ENCODE measurements at regions of chr11 and their contacts with region 1.

Region 1: DNA sequence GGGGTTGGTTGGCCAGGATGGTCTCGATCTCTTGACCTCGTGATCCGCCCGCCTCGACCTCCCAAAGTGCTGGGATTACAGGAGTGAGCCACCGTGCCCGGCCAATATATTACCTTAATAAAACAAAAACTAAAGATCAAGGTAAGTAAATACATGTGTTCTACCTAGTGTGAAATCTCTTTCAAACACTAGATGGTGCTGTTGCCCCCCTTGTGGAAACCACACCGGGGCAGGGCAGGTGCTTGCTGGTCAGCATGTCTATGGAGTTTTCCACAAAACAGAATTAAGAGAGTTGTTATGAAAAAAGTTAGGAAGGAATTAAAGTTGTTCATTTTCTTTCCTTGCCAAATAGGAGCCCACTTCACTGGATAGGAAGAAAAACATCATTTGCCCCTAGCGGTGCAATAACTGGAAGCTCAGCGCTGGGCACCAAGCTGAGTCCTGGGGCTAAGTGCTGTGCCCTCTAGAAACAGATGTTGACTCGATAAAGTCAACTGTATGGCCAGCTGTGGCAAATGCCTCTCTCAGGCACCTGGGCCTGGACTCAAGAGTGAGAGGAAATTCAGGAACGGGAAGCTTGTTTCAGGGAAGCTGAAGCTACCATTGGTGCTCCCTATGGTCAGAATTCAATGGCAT is 6.3 kb upstream of the KCNJ5 start:
- DNase-seq: peak in 41 of 42 donors; percentile 37 to 87 (median 68)

Region 2: DNA sequence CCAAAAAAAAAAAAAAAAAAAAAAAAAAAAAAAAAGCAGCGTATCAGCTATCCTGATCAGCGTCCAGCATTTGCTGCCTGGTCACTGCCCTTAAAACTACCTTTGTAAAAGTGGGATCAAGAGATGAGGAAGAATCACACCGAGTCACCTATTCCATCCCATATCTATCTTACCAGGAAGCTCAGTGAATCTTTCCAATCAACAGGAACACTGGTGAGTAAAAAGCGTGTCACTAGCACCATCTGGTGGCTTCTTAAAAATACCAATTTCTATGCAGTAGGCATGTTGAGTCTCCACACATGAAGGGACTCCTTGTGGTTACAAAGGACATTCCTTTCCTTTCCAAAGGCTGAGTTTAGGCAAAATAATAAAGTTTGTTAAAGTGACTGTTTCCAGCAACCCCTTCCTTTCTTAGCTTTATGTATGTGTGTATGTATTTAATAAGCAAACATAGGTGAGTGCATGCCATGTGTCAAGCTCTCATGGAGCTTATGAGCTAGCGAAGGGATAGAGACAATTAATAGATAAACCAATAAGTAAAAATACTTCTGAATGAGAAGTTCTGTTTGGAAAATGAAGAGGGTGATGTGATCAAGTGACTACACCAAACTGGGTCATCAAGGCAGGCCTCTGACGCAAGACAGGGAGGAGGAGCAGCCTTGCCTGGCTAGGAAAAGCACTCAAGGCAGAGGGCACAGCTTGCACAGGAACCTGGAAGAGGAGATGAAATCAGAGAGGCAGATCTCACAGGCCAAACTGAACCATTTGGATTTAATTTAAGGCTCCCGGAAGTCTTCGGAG is 71.8 kb after region 1 on chr11:
- intact Hi-C with region 1: loop called (anchors 5 kb)
- DNase-seq: peak in 20 of 42 donors; percentile 20 to 78 (median 61)

Measured in head of caudate nucleus (tissue), 42 donors.